B cell (primary cell): ENCODE measurements at regions of chr5 and their contacts with region 1.

Region 1: GRCh38 chr5:127030259-127031146 is at the start of gene MARCHF3:
- DNase-seq: peak; percentile 97
- ATAC-seq: peak; percentile 91
- H3K4me3 ChIP-seq: peak within 1 kb of the TSS; percentile 82 to 96 (median 88)
- H3K4me3 Mint-ChIP-seq: peak within 1 kb of the TSS; percentile 97
- H3K27ac ChIP-seq: peak within 1 kb of the TSS; percentile 65 to 89
- H3K27ac Mint-ChIP-seq: peak within 1 kb of the TSS; percentile 96
- H3K4me1 ChIP-seq: peaks cover 25 to 35% of the 10 kb centered on the region in 2 donors
- H3K4me1 Mint-ChIP-seq: peaks cover 45% of the 10 kb centered on the region
- H3K27me3 ChIP-seq: no peaks in the 10 kb centered on the region
- H3K27me3 Mint-ChIP-seq: no peaks in the 10 kb centered on the region
- CTCF ChIP-seq: peak; percentile 36
- total RNA-seq, gene MARCHF3: 35.0 and 42.2 TPM in 2 replicates

Region 2: DNA sequence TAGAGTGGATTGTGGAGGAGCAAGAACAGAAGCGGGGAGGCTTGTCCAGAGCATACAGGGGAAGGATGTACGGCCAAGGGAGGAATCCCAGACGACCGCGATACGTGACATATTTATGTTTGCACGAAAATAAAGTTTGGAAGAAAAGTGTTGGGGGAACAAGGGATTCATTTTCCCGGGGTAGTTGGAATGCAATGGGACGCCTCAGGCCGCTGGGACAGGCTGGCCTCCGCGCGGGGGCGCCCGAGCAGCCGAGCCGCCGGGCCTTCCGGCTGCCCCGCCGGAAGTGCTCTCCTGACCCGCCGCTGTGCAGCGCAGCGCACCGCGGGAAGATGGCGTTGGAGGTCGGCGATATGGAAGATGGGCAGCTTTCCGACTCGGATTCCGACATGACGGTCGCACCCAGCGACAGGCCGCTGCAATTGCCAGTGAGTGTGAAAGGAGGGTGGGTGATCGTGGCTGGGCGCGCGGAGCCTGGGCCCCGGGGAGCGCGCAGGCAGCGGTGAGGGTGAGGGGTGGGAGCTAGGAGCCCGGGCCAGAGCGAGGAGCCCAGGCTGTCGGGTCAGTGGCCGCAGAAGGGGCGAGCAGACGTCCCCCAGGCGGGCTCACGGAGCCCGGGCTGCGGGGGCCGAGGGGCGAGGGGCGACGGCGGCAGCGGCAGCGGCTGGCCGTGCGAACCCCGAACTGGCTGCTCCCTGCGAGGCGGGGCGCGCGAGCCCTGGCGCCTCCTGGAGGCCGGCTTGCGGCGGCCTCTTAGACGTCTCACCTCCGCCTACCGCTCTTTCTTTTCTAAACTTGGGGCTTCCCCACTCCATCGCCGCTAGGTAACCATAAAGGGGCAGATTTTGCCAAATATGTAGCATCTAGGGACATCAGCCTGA is 429.6 kb before region 1 on chr5 and contains the start of gene PHAX:
- CTCF ChIA-PET with region 1: no interaction called
- POLR2A ChIA-PET with region 1: no interaction called
- intact Hi-C with region 1: loop called (anchors 1 kb)
- DNase-seq: peak; percentile 86
- ATAC-seq: peak; percentile 93
- H3K4me3 ChIP-seq: peak within 1 kb of the TSS; percentile 69 to 93 (median 86)
- H3K4me3 Mint-ChIP-seq: peak within 1 kb of the TSS; percentile 99
- H3K27ac ChIP-seq: peak within 1 kb of the TSS; percentile 50 to 71
- H3K27ac Mint-ChIP-seq: peak within 1 kb of the TSS; percentile 97
- H3K4me1 ChIP-seq: peaks cover 16 to 17% of the 10 kb centered on the region in 2 donors
- H3K4me1 Mint-ChIP-seq: peaks cover 29% of the 10 kb centered on the region
- H3K27me3 ChIP-seq: no peaks in the 10 kb centered on the region
- H3K27me3 Mint-ChIP-seq: no peaks in the 10 kb centered on the region
- CTCF ChIP-seq: peak; percentile 80
- total RNA-seq, gene PHAX: 42.7 and 43.9 TPM in 2 replicates

Region 3: DNA sequence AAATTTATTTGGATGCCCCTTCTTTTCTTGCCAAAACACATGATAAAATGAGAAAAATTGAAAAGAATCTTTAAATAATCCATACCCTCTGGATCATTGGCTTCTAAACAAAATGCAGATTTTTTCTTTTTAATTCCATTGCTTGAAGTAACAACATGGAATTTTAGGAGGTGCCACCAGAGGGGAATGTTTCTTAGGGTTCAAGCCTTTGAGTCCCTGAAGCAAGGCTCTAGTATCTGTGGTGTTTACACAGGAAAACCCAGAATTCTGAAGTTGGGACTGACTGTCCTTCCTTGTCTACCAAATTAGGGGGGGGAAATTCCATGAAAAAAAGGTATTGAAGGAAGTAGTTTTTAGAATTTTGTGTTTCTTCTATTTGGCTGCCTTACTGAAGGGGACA is 184.2 kb before region 1 on chr5:
- CTCF ChIA-PET with region 1: no interaction called
- POLR2A ChIA-PET with region 1: interaction called, 7 read pairs
- intact Hi-C with region 1: loop called (anchors 2 kb)
- DNase-seq: no peak
- ATAC-seq: no peak
- H3K4me3 ChIP-seq: peak overlapping the region in 1 of 5 experiments; percentile 38
- H3K4me3 Mint-ChIP-seq: peak overlapping the region; percentile 20
- H3K27ac ChIP-seq: peak overlapping the region; percentile 89
- H3K27ac Mint-ChIP-seq: peak overlapping the region; percentile 35
- H3K4me1 ChIP-seq: peaks cover 16 to 26% of the 10 kb centered on the region in 2 donors
- H3K4me1 Mint-ChIP-seq: peaks cover 44% of the 10 kb centered on the region
- H3K27me3 ChIP-seq: no peaks in the 10 kb centered on the region
- H3K27me3 Mint-ChIP-seq: no peaks in the 10 kb centered on the region
- CTCF ChIP-seq: no peak

Region 4: DNA sequence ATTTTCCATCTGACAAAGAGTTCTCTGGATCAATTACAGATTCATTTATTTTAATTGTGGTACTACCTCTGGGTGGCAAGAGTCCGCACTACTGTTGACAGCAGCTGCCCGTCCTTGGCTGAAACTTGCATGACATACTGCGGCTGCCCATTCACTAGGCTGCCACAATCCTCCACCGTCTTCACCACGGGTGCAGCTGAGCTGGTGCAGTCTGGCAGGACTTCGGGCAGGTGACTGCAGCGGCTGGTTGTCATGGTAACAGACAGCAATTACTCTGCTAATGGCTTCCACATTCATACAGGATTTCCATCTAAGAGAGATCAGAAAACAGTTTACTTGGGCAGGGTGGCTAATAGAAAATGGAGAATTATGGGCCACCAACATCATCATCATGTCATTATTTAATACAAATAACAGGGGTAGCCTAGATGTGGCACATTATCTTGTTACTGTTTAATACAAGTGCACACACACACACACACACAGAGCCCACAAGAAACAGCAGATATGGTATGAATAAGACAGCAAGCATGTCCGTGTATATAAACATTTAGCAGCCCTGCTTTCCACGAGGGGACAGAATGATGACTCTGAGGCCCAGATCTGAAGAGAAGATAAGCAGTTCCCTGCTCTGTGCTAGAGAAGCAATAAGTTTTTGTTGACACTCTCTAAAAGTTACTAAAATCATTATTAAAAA is 112.4 kb before region 1 on chr5:
- CTCF ChIA-PET with region 1: no interaction called
- POLR2A ChIA-PET with region 1: no interaction called
- intact Hi-C with region 1: loop called (anchors 5 kb)
- DNase-seq: no peak
- ATAC-seq: no peak
- H3K4me3 ChIP-seq: no peak overlapping the region
- H3K4me3 Mint-ChIP-seq: no peak overlapping the region
- H3K27ac ChIP-seq: no peak overlapping the region
- H3K27ac Mint-ChIP-seq: no peak overlapping the region
- H3K4me1 ChIP-seq: peaks cover 2 to 6% of the 10 kb centered on the region in 2 donors
- H3K4me1 Mint-ChIP-seq: peaks cover 17% of the 10 kb centered on the region
- H3K27me3 ChIP-seq: no peaks in the 10 kb centered on the region
- H3K27me3 Mint-ChIP-seq: no peaks in the 10 kb centered on the region
- CTCF ChIP-seq: no peak

Region 5: DNA sequence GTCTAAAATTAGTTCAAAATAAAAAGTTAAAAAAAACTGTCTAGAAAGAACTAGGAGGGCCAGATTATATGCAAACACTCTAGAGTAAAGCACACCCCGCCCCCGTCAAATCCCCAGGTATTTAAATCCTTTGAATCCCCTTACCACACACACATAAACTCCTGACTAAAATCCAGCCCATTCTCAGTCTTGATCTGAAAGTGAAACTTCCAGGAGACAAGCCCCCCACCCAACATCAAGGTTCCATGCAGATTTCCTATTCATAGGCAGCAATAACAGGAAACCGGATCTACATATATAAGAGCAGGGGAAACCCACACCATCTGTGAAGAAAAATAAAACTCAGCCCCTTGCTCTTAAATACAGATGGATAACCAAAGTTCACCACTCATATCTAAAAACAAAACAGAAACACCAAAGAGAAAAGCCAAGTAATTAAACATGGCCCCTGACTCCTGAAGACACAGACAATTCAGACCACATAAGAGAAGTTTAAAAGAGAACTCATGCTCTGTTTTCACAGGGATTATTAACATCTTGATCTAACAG is 42.4 kb before region 1 on chr5:
- CTCF ChIA-PET with region 1: no interaction called
- POLR2A ChIA-PET with region 1: interaction called, 4 read pairs
- intact Hi-C with region 1: loop called (anchors 1 kb)
- DNase-seq: peak; percentile 85
- ATAC-seq: peak; percentile 87
- H3K4me3 ChIP-seq: peak overlapping the region; percentile 27 to 52 (median 42)
- H3K4me3 Mint-ChIP-seq: peak overlapping the region; percentile 88
- H3K27ac ChIP-seq: peak overlapping the region; percentile 91 to 94
- H3K27ac Mint-ChIP-seq: peak overlapping the region; percentile 97
- H3K4me1 ChIP-seq: peaks cover 71% of the 10 kb centered on the region in 2 donors
- H3K4me1 Mint-ChIP-seq: peaks cover 80% of the 10 kb centered on the region
- H3K27me3 ChIP-seq: no peaks in the 10 kb centered on the region
- H3K27me3 Mint-ChIP-seq: no peaks in the 10 kb centered on the region
- CTCF ChIP-seq: no peak

Region 6: GRCh38 chr5:127072861-127073846 is 42.7 kb after region 1 on chr5 and contains the start of gene C5orf63:
- CTCF ChIA-PET with region 1: interaction called, 10 read pairs
- POLR2A ChIA-PET with region 1: interaction called, 7 read pairs
- intact Hi-C with region 1: loop called (anchors 1 kb)
- DNase-seq: peak; percentile 88
- ATAC-seq: peak; percentile 97
- H3K4me3 ChIP-seq: peak within 1 kb of the TSS; percentile 60 to 76 (median 73)
- H3K4me3 Mint-ChIP-seq: peak within 1 kb of the TSS; percentile 92
- H3K27ac ChIP-seq: peak within 1 kb of the TSS; percentile 66 to 93
- H3K27ac Mint-ChIP-seq: peak within 1 kb of the TSS; percentile 93
- H3K4me1 ChIP-seq: peaks cover 7 to 13% of the 10 kb centered on the region in 2 donors
- H3K4me1 Mint-ChIP-seq: peaks cover 9% of the 10 kb centered on the region
- H3K27me3 ChIP-seq: no peaks in the 10 kb centered on the region
- H3K27me3 Mint-ChIP-seq: no peaks in the 10 kb centered on the region
- CTCF ChIP-seq: no peak
- total RNA-seq, gene C5orf63: 20.0 and 25.4 TPM in 2 replicates